Activated CD4-positive, alpha-beta T cell treated with anti-CD3 and anti-CD28 coated beads, Interleukin-2, amount 10 ng/mL, durations not matched to agents 24 days and 14 days (primary cell): ENCODE measurements at regions of chrX and their contacts with region 1.

Region 1: DNA sequence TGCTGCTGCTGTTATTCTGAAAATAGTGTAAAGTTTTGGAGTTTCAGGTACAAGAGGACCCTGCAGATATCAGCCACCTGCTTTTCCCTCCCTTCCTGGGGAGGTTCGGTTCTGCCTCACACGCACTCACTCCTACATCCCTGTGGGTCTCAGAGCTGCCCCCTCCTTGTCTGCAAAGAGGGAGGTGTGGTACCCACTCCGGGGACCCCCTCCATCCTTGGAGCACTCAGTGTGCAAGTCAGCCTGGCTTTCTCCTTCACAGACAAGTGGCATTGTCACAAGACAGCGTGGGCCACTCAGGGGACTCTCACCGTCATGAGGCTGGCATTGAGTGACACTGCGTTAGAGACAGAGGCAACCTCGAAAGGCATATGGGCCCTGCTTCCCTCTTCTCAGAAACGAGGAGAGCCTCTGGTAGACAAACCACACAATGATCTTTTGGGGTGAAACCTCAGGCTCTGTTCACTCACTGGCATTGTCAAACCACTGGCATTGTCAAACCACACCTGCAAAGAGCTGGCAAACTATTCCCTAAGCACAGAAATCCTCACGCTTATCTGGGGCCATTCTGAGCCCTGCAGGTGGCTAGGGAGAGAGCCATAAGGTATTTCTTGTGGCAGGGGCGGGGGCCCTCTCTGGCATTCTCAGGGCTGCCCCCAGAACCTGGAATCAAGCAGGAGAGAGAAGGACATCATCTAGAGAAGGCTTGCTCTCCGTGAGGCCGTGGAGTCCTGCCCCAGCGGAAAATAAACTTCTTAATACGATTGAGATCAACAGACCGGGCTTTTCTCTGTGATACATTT is 285.0 kb downstream of the SHOX start:
- DNase-seq: peak; percentile 78
- H3K4me3 Mint-ChIP-seq: no peak overlapping the region
- H3K27ac Mint-ChIP-seq: no peak overlapping the region
- H3K4me1 Mint-ChIP-seq: no peaks in the 10 kb centered on the region
- H3K27me3 Mint-ChIP-seq: no peaks in the 10 kb centered on the region

Region 2: GRCh38 chrX:572537-573124 is 343.0 kb before region 1 on chrX:
- intact Hi-C with region 1: loop called (anchors 10 kb)
- DNase-seq: no peak
- H3K4me3 Mint-ChIP-seq: no peak overlapping the region
- H3K27ac Mint-ChIP-seq: no peak overlapping the region
- H3K4me1 Mint-ChIP-seq: no peaks in the 10 kb centered on the region
- H3K27me3 Mint-ChIP-seq: no peaks in the 10 kb centered on the region

Region 3: DNA sequence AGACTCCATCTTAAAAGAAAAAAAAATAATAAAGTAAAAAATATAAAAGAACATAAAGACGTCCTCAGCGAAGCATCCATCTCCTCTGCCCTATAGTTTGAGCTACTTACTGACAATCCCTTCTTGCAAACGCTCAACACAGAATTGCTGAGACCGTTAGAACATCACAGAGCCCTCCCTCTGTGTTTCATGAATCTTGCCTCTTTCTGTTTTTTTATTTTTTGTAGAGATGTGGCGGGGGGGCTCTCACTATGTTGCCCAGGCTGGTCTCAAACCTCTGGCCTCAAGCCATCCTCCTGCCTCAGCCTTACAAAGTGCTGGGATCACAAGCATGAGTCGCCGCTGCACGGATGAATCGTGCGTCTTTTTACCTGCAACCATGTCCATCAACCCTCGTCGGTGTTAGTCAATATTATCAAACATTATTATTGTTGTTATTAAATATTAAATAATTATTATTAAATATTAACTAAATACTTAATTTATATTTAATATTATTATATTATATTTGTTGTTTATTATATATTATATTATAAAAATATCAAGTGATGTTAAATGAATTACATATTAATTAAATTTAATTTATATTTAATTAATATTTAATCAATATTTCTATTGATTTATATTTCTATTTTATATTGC is 96.1 kb after region 1 on chrX:
- intact Hi-C with region 1: loop called (anchors 5 kb)
- DNase-seq: no peak
- H3K4me3 Mint-ChIP-seq: no peak overlapping the region
- H3K27ac Mint-ChIP-seq: no peak overlapping the region
- H3K4me1 Mint-ChIP-seq: no peaks in the 10 kb centered on the region
- H3K27me3 Mint-ChIP-seq: no peaks in the 10 kb centered on the region